Naive thymus-derived CD4-positive, alpha-beta T cell (primary cell): ENCODE measurements at regions of chr2 and their contacts with region 1.

Region 1: DNA sequence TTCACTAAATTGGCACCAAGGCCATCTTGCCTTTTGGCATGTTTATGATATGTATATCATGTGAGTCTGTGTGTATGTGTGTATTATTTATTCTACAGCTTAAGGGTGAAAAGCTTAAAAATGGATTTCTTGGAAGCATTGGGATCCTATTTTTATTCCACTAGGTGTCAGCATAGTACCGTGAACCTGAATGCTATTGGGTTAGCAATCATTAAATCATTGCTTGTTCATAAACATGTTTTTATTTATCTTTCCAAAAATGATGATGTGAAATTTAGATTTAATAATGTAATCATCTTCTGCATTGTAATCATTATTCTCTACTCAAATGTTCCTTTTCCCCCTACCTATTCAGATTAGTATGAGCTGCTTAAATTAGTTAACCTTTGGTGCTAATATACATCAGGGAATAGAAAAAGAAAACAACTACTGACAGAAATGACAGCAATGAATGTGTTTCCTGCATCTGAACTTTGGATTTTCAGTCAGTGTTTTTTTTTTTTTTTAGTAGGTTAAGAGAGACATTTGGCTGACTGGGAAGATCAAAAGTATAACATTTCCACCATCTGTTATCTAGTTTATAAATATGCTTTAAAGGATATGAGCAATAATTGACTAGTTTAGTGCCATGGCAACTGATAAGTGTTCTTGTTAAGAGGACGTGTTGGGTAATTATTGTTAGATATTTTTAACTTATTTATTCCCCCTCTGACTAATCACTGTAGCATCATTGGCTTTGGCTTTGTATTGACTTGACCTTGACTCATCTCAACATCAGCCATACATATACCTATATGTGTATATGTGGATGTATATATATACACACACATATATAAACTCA is 14.1 kb upstream of the ZSWIM2 start:
- DNase-seq: no peak
- ATAC-seq: no peak
- H3K4me3 ChIP-seq: no peak overlapping the region
- H3K4me3 Mint-ChIP-seq: no peak overlapping the region
- H3K27ac ChIP-seq: no peak overlapping the region
- H3K27ac Mint-ChIP-seq: no peak overlapping the region
- H3K4me1 ChIP-seq: no peaks in the 10 kb centered on the region
- H3K4me1 Mint-ChIP-seq: no peaks in the 10 kb centered on the region
- H3K27me3 ChIP-seq: no peaks in the 10 kb centered on the region
- H3K27me3 Mint-ChIP-seq: no peaks in the 10 kb centered on the region

Region 2: DNA sequence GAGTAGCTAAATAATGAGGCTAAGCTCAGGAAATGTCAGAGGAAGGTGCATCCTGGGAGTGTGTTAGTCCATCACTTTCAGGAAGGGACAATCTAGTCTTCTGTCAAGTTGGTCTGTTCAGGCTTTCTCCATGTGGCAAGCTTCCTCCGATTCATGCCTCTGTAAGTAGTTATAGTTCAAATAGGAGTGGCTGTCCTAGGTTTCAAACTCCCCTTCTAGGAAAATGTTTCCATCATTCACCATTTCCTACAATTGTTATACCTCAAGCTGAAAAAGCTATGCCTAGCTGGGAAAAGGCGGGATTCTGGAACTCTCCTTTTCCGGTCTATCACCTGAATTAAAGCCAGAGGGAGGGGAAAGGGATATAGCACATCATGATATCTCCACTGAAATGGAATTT is 273.6 kb after region 1 on chr2:
- CTCF ChIA-PET with region 1: no interaction called
- POLR2A ChIA-PET with region 1: no interaction called
- intact Hi-C with region 1: no loop called
- DNase-seq: no peak
- ATAC-seq: no peak
- H3K4me3 ChIP-seq: no peak overlapping the region
- H3K4me3 Mint-ChIP-seq: no peak overlapping the region
- H3K27ac ChIP-seq: no peak overlapping the region
- H3K27ac Mint-ChIP-seq: no peak overlapping the region
- H3K4me1 ChIP-seq: no peaks in the 10 kb centered on the region
- H3K4me1 Mint-ChIP-seq: no peaks in the 10 kb centered on the region
- H3K27me3 ChIP-seq: no peaks in the 10 kb centered on the region
- H3K27me3 Mint-ChIP-seq: no peaks in the 10 kb centered on the region

Region 3: DNA sequence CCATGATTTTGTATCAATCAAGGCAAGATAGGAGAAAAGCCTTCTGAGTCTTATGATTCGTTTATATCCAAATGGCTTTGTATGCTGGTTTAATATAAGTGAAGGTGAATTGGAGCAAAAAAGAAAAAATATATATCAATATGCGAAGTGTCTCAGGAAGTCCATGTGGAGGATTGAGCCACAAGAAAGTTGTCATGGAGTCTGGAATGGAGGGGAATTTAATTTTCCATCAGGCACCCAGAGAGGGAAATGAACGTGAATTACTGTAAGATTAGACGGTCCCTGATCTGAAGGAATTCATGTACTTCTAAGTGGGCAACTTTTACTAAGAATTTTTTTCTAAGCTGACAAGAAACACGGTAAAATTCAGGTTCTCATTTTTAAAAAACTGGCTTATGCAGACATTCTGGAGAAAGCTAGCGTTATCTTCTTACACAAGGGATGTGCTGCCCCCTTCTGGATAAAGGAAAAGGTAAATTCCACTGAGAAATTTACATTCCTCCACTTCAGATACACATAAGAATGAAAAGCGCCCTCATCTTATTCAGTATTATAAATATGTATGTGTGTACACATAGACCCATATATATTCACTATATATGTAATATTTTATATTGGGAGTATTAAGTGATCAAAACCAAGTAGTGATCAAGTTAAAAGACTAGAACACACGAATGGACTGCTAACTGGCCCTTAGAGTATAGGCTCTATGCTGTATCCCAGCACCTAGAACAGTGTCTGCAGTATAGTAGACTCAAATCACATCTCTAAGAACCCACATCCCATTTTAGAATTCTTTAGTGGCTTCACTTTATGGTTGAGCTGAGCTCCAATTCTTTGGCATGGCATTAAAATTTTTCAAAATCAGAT is 980.1 kb after region 1 on chr2:
- CTCF ChIA-PET with region 1: no interaction called
- POLR2A ChIA-PET with region 1: no interaction called
- intact Hi-C with region 1: loop called in 1 of 2 experiments (anchors 2 kb)
- DNase-seq: no peak
- ATAC-seq: no peak
- H3K4me3 ChIP-seq: no peak overlapping the region
- H3K4me3 Mint-ChIP-seq: no peak overlapping the region
- H3K27ac ChIP-seq: no peak overlapping the region
- H3K27ac Mint-ChIP-seq: no peak overlapping the region
- H3K4me1 ChIP-seq: no peaks in the 10 kb centered on the region
- H3K4me1 Mint-ChIP-seq: no peaks in the 10 kb centered on the region
- H3K27me3 ChIP-seq: no peaks in the 10 kb centered on the region
- H3K27me3 Mint-ChIP-seq: peaks cover 0 to 3% (median 0%) of the 10 kb centered on the region in 5 donors